Activated CD4-positive, alpha-beta memory T cell treated with anti-CD3 and anti-CD28 coated beads, Interleukin-2, amount 10 ng/mL, durations not matched to agents 7 days and 5 days (primary cell): ENCODE measurements at regions of chr1 and their contacts with region 1.

Region 1: DNA sequence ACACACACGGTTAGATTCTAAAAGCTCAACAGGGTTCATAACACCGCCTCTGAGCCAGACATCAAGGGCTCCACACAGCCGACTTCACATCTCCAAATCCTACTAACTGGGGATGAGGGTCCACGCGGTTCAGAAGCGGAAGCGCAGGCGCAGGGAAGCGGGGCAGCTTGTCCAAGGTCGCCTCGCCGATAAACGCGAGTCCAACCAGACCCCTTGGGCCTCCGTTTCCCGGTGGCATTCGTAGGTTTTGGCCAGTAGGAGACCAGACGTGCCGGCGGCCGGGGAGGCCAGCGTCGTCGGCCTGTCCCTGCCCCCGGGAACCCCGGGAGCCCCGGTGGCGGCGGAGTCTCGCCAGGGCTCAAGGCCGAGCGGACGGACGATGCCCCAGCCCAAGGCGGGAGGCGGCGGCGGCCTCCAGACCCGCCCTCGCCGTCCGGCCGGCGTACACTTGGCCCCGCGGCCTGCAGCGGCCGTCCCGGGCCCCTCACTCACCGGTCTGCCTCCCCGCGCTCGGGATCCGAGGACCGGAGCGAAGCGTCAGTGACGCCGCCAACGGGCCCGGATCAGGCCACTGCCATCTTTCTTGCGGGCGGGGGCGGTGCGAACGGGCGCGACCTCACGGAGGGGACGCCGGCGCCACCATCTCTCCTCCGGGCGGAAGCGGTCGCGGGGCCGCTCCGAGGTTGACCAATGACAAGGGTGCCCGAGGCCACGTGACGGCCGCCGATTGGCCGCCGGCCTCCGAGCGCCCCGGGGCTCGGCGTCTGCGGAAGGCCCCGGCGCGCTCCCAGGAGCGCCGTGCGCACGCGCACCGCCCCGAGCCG is at the start of gene SDF4:
- DNase-seq: peak; percentile 97
- H3K4me3 Mint-ChIP-seq: peak within 1 kb of the TSS; percentile 85
- H3K27ac Mint-ChIP-seq: peak within 1 kb of the TSS; percentile 91
- H3K4me1 Mint-ChIP-seq: peaks cover 37% of the 10 kb centered on the region
- H3K27me3 Mint-ChIP-seq: no peaks in the 10 kb centered on the region
- total RNA-seq, gene SDF4: 181 TPM

Region 2: DNA sequence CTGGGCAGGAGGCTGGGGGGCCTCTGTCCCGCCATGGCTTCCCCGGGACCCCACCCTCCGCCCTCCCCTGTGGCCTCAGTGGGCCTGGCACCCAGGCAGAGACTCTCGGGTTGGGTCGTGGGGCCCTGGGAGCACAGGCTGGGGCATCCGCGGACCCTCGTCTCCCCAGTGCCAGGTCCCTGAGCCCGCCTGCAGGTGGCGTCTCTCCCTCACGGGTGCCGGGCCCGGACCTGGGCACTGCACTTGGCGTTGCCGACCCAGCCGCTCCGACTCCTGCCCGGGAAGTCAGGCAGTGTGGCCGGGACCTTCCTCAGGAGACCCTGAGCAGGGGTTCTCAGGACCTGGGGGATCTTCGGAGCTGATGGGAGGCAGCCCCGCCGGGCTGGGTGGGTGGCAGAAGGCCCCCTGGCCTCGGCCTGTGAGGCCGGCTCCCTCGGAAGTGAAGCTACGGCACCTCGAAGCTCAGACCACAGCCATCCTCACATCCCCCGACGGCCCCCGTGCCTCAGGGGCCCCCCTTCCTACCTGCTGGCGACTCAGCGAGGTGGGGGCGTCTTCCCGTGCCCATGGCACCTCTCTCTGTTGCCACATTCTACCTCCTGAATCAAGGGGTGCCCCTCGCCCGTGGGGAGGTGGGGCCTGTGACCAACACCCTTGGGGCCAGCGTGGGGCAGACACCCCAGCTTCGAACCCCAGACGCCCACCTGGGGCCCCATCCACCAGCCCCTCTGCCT is 109.4 kb before region 1 on chr1:
- CTCF ChIA-PET with region 1: interaction called, 47 read pairs
- POLR2A ChIA-PET with region 1: interaction called, 11 read pairs
- DNase-seq: peak; percentile 87
- H3K4me3 Mint-ChIP-seq: no peak overlapping the region
- H3K27ac Mint-ChIP-seq: no peak overlapping the region
- H3K4me1 Mint-ChIP-seq: peaks cover 10% of the 10 kb centered on the region
- H3K27me3 Mint-ChIP-seq: peaks cover 15% of the 10 kb centered on the region

Region 3: DNA sequence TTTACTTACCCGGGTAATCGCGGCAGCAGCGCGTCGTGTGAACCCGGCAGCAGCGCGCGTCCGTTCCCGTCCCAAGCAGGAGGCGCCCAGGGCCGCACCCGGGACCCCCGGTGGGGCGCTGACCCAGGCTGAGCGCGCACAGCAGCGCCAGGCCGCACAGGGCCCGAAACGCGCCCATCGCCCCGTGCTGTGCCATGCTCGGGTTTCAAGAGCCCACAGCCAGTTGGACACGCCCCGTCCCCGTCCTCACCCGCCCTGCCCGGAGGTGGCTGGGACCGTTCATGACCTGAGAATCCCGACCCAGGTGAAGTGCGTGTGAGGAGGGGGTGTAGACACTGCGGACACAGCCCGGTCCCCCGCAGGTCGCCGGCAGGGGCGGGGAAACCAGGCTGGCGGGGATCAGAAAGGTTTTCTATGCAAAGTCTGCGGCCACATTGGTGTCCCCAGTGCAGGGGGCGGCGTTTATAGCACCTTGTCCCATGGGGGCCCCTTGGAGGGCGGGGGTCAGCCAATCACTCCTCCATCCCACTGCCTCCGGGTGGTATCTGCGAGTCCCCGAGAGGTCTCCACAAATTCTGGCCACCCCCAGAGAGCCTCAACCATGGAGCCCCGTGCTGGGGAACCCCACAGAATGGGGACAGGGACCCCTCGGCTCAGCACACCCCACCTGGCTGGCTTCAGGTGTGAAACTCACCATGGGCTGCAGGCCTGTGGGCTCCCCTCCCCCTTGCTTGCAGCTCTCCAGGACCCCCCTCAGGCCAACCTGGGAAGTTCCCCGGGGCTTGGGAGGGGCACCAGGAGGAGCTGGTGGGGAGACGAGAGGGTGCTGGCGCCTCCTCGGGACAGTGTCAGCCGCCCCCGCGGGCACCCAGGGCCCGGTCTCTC is 25.0 kb before region 1 on chr1 and contains the start of gene TNFRSF18:
- CTCF ChIA-PET with region 1: interaction called, 4 read pairs
- POLR2A ChIA-PET with region 1: interaction called, 14 read pairs
- DNase-seq: peak; percentile 62
- H3K4me3 Mint-ChIP-seq: peak within 1 kb of the TSS; percentile 78
- H3K27ac Mint-ChIP-seq: peak within 1 kb of the TSS; percentile 99
- H3K4me1 Mint-ChIP-seq: peaks cover 39% of the 10 kb centered on the region
- H3K27me3 Mint-ChIP-seq: no peaks in the 10 kb centered on the region
- total RNA-seq, gene TNFRSF18: 115 to 116 TPM

Region 4: DNA sequence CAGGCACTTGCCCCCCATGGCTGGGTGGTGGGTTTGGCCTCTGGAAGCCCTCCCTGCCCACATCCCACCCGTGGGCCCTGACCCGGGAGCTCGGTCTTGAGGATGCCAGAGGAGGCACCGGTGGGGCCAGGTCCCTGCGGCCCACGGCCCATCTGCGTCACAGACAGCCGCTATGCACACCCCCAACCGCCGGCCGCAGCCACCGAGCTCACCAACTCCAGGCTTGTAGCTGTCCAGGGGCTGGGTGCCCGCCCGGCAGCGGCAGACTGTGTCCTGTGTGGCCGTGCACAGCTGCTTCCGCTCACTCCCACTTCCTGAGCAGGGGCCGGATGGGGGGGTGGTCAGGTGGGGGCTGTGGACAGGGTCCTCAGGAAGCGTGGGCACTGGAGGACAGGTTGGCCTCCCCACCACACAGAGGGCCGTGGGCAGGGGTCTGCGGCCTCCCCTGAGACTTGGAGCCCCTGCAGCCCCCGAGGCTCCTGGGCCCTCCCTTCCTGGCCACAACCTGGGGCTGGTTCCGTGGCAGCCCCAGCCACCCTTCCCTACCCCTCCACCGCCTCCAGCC is 18.8 kb before region 1 on chr1:
- CTCF ChIA-PET with region 1: interaction called, 4 read pairs
- POLR2A ChIA-PET with region 1: interaction called, 21 read pairs
- DNase-seq: peak; percentile 80
- H3K4me3 Mint-ChIP-seq: peak overlapping the region; percentile 71
- H3K27ac Mint-ChIP-seq: peak overlapping the region; percentile 72
- H3K4me1 Mint-ChIP-seq: peaks cover 67% of the 10 kb centered on the region
- H3K27me3 Mint-ChIP-seq: no peaks in the 10 kb centered on the region

Region 5: DNA sequence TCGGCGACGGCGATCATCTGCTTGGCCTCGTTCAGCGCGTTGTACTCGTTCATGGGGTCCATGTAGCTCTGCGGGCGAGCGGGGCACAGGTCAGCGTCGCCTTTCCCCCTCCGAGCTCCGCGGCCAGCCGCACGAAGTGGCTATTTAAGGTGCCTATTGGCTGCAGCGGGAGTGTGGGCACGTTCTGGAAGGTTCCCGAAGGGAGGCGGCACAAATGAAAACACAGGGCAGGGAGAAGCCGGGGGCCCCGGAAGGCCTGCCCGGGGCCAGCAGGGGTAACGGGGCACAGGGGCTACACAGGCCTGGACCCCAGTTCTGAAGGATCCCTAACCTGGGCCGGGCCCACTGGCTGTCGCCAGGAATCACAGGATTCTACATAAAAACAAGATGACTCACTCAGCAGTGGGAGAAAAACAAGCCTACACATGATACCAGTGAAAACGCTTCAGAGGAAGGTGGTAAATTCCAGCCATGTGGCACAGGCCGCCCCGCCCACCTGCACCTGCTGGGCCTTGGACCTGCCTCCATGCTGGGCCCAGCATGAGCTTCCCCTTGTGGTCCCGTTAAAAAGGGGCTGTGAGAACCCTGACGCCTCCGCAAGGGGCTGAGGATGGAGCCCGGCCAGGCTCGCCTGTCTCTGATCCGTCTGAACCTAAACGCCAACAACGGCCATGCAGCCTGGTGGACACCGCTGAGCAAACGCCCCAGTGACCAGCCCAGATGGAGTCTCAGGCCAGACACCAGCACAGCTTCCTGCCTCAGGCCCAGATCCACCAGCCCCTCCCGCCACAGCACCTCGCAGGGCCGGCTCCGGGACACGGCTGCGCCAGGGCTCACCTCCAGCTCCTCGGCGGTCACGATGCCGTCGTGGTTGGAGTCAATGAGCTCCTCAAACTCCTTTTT is 13.7 kb before region 1 on chr1:
- CTCF ChIA-PET with region 1: interaction called, 4 read pairs
- POLR2A ChIA-PET with region 1: interaction called, 21 read pairs
- DNase-seq: no peak
- H3K4me3 Mint-ChIP-seq: no peak overlapping the region
- H3K27ac Mint-ChIP-seq: peak overlapping the region; percentile 91
- H3K4me1 Mint-ChIP-seq: peaks cover 67% of the 10 kb centered on the region
- H3K27me3 Mint-ChIP-seq: no peaks in the 10 kb centered on the region

Region 6: GRCh38 chr1:1273512-1274298 is 42.1 kb after region 1 on chr1 and contains the start of gene UBE2J2:
- CTCF ChIA-PET with region 1: interaction called, 4 read pairs
- POLR2A ChIA-PET with region 1: interaction called, 16 read pairs
- DNase-seq: peak; percentile 94
- H3K4me3 Mint-ChIP-seq: peak within 1 kb of the TSS; percentile 87
- H3K27ac Mint-ChIP-seq: peak within 1 kb of the TSS; percentile 82
- H3K4me1 Mint-ChIP-seq: peaks cover 39% of the 10 kb centered on the region
- H3K27me3 Mint-ChIP-seq: no peaks in the 10 kb centered on the region
- total RNA-seq, gene UBE2J2: 62.4 to 63.5 TPM